ENCODE measurements at regions of chr10 and their contacts with region 1.

Region 1: GRCh38 chr10:89369156-89370105 is 8.4 kb upstream of the IFIT1B start:
- DNase-seq: no peak
- H3K4me3 ChIP-seq: no peak overlapping the region
- CTCF ChIP-seq: peak; percentile 35

Region 2: GRCh38 chr10:89251409-89252224 is 117.8 kb before region 1 on chr10 and contains the start of gene LIPA:
- CTCF ChIA-PET with region 1: interaction called, 30 read pairs
- POLR2A ChIA-PET with region 1: no interaction called
- DNase-seq: peak; percentile 81
- H3K4me3 ChIP-seq: peak within 1 kb of the TSS; percentile 83
- CTCF ChIP-seq: no peak

Region 3: DNA sequence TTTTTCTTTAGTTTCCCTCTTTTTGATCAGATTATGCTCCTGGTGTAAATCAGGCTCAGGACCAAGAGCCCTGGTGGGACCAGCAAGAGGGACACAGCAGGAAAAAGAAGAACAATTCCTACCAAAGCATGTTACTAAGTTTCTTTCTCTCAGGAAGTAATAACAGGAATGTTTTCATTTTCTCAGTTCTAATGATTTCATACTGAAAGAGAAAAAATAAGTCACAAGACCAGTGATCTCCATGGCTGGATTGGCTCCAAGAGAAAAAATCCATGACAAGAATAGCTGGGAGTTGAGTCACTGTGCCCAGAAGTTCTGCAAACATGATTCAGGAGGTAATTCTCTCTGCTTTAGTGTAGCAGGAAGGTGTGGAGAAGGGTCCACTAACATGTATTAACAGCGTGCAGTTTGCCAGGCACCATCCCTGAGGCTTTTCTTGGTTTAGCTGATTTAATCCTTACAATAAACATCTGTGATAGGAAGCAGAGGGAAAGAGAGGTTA is 91.3 kb before region 1 on chr10:
- CTCF ChIA-PET with region 1: interaction called, 30 read pairs
- POLR2A ChIA-PET with region 1: no interaction called
- DNase-seq: peak; percentile 93
- H3K4me3 ChIP-seq: no peak overlapping the region
- CTCF ChIP-seq: no peak

Region 4: DNA sequence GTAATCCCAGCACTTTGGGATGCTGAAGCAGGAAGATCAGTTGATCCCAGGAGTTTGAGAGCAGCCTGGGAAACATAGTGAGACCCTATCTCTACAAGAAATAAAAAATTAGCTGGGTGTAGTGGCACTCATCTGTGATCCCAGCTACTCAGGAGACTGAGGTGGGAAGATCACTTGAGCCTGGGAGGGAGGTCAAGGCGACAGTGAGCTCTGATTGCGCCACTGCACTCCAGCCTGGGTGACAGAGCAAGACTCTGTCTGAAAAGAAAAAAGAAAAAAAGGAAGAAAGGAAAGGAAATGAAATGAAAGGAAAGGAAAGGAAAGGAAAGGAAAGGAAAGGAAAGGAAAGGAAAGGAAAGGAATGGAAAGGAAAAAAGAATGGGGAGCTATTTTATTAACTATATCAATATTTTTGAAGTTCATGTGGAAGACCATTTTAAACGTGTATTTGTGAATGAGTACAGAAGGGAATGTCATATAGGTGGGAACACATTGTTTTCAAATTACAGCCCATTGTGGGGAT is 74.7 kb before region 1 on chr10:
- CTCF ChIA-PET with region 1: interaction called, 27 read pairs
- POLR2A ChIA-PET with region 1: no interaction called
- DNase-seq: no peak
- H3K4me3 ChIP-seq: no peak overlapping the region
- CTCF ChIP-seq: no peak

Region 5: GRCh38 chr10:89351780-89352597 is 17.4 kb before region 1 on chr10:
- CTCF ChIA-PET with region 1: interaction called, 75 read pairs
- POLR2A ChIA-PET with region 1: interaction called, 9 read pairs
- DNase-seq: peak; percentile 94
- H3K4me3 ChIP-seq: peak overlapping the region; percentile 42
- CTCF ChIP-seq: no peak

Region 6: GRCh38 chr10:89391917-89392756 is 22.7 kb after region 1 on chr10 and contains the start of gene IFIT1:
- CTCF ChIA-PET with region 1: interaction called, 63 read pairs
- POLR2A ChIA-PET with region 1: no interaction called
- DNase-seq: peak; percentile 85
- H3K4me3 ChIP-seq: peak within 1 kb of the TSS; percentile 75
- CTCF ChIP-seq: no peak

Region 7: GRCh38 chr10:89553064-89553734 is 183.8 kb after region 1 on chr10:
- CTCF ChIA-PET with region 1: no interaction called
- POLR2A ChIA-PET with region 1: no interaction called
- DNase-seq: peak; percentile 81
- H3K4me3 ChIP-seq: no peak overlapping the region
- CTCF ChIP-seq: no peak

Measured in AG04449 (cell line).